ENCODE measurements at regions of chr1 and their contacts with region 1.

Region 1: DNA sequence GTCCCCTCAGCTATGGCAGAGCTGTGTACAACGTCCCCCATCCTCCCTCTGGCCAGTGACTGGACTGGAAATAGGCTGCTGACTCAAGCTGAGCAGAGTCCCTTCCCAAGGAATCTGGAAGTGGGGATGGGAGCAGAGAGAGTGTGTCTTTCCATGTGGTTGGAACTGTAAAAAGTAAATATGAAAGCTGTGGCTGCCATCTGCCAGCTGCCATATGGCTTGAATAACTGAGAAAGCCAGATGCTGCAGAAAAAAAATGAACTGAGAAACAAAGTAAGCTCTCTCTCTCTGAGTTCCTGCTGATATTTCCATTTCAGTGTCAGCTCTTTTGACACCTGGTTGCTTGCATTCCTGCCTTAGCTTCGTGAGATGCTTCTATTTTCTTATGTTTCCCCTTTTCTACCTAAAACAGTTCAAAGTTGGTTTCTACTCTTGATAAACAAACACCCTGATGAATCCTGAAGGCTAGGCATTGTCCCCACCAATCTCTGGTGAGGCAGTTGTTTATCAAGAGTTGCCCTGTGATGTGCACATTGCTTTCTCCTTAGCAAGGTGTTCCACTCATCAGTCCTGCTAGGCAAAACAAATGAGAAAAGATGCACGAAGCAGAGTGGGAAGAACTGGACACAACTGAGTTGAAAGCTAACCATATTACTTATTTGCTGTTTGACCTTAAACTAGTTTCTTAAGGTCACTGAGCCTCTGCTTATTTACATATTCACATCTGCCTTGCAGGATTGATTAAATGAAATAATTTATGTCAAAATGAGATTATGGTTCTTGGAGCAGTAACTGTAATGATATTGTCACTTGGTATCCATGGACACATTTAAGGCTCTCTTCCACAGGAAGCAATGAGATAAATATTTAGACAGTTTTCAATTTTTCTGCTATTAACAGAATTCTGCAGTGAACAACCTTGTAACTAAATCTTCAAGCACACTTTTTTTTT is 16.6 kb upstream of the DR1 start:
- DNase-seq: no peak
- H3K27ac ChIP-seq: no peak overlapping the region
- CTCF ChIP-seq: no peak

Region 2: DNA sequence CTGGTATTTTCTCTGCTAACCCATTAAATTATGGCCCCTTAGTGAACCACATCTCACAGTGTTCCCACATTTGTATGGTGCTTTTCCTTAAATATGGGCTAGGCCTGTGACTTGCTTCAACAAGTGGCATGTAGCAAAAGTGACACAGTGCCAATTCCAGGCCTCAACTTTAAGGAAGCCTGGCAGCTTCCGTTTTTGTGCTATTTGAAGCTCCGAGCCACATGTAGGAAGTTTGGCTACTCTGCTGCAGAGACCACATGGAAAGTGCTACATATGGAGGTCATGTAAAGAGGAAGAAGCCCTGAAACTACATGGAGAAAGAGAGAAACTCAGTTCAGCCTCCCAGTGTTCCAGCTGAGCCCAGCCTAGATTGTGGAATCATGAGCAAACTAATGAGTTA is 11.9 kb before region 1 on chr1:
- CTCF ChIA-PET with region 1: no interaction called
- POLR2A ChIA-PET with region 1: no interaction called
- DNase-seq: no peak
- H3K27ac ChIP-seq: no peak overlapping the region
- CTCF ChIP-seq: no peak

Region 3: GRCh38 chr1:93345633-93346420 is 16.7 kb after region 1 on chr1 and contains the start of gene DR1:
- CTCF ChIA-PET with region 1: no interaction called
- POLR2A ChIA-PET with region 1: interaction called, 10 read pairs
- DNase-seq: peak; percentile 93
- H3K27ac ChIP-seq: peak within 1 kb of the TSS; percentile 95
- CTCF ChIP-seq: no peak

Measured in RWPE1 (cell line).